Sigmoid colon (tissue), 7 donors: ENCODE measurements at regions of chr18 and their contacts with region 1.

Region 1: DNA sequence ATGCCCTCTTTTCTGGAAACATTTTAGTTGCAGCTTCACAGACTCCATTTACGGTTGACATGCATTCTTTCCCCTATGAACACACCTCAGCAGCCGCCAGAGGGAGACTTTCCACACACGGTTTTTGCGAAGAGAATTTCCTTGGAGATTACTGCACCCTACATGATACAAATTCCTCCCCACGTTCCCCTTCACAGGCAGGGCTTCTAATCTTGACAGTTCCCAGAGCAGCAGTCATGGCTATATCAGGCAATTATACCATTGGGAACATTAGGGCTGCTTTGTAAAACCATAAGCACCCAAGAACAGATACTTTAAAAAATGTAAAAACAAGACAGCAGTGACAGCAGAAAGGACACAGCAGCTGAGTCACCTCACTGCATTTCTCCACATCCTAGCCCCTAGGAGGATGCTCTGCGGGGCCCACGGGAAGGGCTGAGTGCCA is 253.8 kb downstream of the TGIF1 start:
- DNase-seq: no peak
- H3K4me3 ChIP-seq: peak overlapping the region in 1 of 4 donors; percentile 2
- H3K27ac ChIP-seq: no peak overlapping the region
- H3K4me1 ChIP-seq: peaks cover 0 to 8% (median 2%) of the 10 kb centered on the region in 4 donors
- H3K27me3 ChIP-seq: peaks cover 0 to 2% (median 0%) of the 10 kb centered on the region in 3 donors
- CTCF ChIP-seq: peak in 3 of 4 experiments; percentile 48 to 66 (median 51)
- EP300 ChIP-seq: no peak
- POLR2A ChIP-seq: no peak

Region 2: GRCh38 chr18:3869848-3870247 is 166.1 kb after region 1 on chr18:
- intact Hi-C with region 1: loop called (anchors 5 kb)
- DNase-seq: no peak
- H3K4me3 ChIP-seq: no peak overlapping the region
- H3K27ac ChIP-seq: no peak overlapping the region
- H3K4me1 ChIP-seq: no peaks in the 10 kb centered on the region
- H3K27me3 ChIP-seq: no peaks in the 10 kb centered on the region
- CTCF ChIP-seq: peak in 3 of 4 experiments; percentile 14 to 37 (median 17)
- EP300 ChIP-seq: no peak
- POLR2A ChIP-seq: no peak

Region 3: DNA sequence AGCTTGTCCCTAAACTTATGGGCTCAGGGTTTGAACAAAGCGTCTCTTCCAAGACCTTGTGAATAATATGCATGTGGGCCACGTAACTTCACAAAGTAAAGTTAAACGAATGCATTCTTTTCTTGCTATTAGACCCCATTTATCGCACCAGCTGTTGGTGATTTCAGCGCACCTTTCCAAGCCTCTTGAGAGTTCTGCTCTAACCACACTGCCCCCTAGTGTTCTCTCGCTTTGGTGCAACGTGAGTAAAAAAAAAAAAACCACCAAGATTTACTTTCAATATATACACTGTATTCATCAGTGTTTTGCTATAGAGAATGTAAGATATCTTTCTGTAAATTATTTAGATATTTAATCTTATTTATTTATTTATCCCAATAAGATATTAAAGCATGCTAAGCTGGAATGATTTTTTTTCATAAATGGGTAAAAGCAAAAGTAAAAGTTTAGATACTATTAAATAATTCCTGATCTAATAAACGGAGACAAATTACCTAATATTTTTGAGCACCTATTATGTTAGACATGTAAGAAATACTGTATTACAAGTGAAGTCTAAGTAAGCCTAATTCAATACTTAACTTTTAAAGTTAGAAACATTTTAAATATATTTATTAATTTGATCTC is 291.8 kb after region 1 on chr18:
- intact Hi-C with region 1: loop called (anchors 10 kb)
- DNase-seq: no peak
- H3K4me3 ChIP-seq: no peak overlapping the region
- H3K27ac ChIP-seq: no peak overlapping the region
- H3K4me1 ChIP-seq: no peaks in the 10 kb centered on the region
- H3K27me3 ChIP-seq: no peaks in the 10 kb centered on the region
- CTCF ChIP-seq: peak in 2 of 4 experiments; percentile 52 to 77
- EP300 ChIP-seq: no peak
- POLR2A ChIP-seq: no peak

Region 4: DNA sequence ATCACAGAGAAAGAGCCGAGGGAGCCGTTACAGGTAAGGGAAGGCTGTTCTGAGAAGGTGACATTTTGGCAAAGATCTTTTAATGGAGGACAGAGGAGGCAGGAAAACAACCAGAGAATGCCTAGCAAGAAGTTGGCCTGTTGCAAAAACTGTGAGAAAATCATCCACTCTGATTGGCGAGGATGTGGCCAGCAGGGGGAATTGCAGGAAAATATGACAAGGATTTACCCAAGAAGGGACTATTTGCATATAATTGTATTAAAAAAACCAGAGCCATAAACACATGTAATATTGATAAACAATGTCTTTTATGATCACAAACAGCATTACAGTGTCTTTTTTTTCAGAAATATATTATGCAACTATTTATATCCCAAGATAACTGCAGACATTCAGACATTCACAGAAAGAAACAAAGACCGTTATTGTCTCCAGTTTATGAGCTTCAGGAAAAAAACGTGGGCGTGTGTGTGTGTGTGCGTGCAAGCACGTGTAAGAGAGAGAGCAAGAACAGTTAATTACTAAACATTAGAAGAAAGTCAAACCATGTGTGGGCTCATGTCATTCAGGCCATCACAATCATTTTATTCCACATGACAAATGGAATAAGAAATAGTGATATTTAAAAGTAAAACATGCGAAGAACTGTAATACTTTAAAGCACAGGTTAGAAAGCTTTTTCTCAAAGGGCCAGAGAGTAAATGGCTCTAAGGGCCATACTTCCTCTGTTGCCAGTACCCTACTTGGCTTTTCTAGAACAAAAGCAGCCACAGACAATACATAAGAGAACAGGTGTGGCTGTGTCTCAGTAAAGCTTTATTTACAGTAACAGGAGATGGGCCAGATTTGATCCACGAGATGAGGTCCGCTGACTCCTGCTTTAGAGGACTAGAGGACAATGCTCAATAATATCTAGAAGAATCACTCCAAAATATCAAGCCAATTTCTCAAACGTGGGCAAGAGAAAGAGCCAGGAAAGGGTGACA is 427.3 kb after region 1 on chr18:
- intact Hi-C with region 1: no loop called
- DNase-seq: no peak
- H3K4me3 ChIP-seq: no peak overlapping the region
- H3K27ac ChIP-seq: no peak overlapping the region
- H3K4me1 ChIP-seq: no peaks in the 10 kb centered on the region
- H3K27me3 ChIP-seq: no peaks in the 10 kb centered on the region
- CTCF ChIP-seq: no peak
- EP300 ChIP-seq: no peak
- POLR2A ChIP-seq: no peak